ENCODE measurements at regions of chr10 and their contacts with region 1.

Region 1: DNA sequence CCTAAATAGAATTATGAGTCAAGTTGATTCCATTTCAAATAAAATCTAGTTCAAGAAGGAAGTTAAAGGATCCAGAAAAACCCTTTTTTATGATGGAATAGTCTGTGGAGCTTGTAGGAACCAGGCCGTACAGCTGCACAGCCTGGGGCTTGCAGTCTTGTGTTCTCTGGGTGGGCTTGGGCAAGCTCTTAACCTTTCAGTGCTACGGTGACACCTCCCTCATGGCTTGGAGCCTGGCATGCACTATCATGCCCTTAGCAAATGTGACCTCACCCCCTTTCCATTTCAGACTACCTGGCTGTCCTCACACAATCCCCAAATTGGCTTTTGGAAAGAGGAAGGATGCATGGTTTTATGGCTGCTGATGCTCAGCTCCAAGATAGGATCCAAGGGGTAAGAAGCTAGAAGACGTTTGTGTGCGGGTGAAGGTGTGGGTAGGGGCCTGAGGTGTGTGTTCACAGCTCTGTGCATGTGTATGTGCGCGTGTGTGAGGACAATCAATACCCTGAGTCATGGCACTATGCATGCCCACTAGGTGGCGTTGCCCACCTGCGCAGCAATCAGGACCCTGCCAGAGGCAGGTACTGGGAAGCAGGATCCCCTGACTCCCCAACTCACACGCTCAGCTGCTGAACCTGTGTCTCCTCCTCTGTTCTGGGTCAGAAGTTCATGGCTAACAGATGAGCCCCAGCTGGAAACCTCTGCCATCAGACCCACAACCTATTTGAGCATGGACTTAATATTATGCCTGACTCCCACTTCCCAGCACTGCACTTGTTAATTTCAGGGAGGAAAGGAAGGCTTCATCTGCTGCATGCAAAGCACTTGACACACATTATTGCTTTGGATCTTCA is 113.4 kb downstream of the PTPN20 start:
- H3K4me3 ChIP-seq: no peak overlapping the region
- H3K27ac ChIP-seq: no peak overlapping the region
- H3K4me1 ChIP-seq: no peaks in the 10 kb centered on the region
- CTCF ChIP-seq: peak; percentile 70

Region 2: GRCh38 chr10:47013507-47014154 is 11.0 kb before region 1 on chr10:
- CTCF ChIA-PET with region 1: interaction called, 26 read pairs
- POLR2A ChIA-PET with region 1: no interaction called
- H3K4me3 ChIP-seq: no peak overlapping the region
- H3K27ac ChIP-seq: no peak overlapping the region
- H3K4me1 ChIP-seq: no peaks in the 10 kb centered on the region
- CTCF ChIP-seq: no peak

Region 3: GRCh38 chr10:47047671-47048525 is 23.3 kb after region 1 on chr10:
- CTCF ChIA-PET with region 1: interaction called, 28 read pairs
- POLR2A ChIA-PET with region 1: no interaction called
- H3K4me3 ChIP-seq: no peak overlapping the region
- H3K27ac ChIP-seq: no peak overlapping the region
- H3K4me1 ChIP-seq: no peaks in the 10 kb centered on the region
- CTCF ChIP-seq: peak; percentile 70

Region 4: GRCh38 chr10:47090903-47091302 is 66.3 kb after region 1 on chr10:
- CTCF ChIA-PET with region 1: no interaction called
- POLR2A ChIA-PET with region 1: no interaction called
- H3K4me3 ChIP-seq: no peak overlapping the region
- H3K27ac ChIP-seq: no peak overlapping the region
- H3K4me1 ChIP-seq: no peaks in the 10 kb centered on the region
- CTCF ChIP-seq: no peak

Region 5: DNA sequence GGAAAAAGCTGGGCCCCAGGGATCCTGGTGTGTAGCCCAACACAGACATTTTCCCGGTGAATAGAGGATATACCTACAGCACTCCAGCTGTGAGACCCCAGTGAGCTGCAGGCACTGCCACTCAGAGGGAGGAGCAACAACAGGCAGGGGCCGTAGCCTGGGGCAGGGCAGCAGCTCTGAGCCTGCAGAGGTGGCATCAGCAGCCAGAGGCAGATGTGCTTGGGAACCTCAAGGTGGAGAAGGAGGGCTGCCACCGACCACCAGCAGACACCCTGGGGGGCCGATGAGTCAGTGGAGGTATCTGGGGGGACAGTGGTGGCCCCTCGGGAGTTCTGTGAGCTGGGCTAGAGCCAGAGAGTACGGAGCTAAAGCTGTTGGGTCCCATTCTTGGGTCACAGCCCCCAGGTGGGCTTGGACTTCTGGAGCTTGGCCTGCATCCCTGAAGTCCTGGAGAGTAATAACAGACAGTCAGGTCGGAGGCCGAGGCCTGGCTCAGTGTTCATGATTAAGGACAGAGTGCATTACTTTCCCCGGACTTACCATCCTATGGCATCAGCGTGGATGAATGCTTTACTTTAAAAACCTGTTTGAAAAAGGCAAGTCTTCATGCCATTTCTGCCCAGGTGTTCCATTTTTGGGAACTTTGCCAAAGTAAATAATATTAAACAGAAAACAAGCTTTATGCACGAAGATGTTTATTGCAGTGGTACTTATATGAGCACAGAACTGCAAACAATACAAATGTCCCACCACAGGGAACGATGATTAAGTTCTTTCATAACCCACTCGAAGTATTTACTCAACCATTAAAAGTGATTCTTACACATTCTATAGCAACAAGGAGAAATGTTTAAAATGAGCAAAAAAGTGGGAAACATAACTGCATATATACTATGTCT is 165.4 kb after region 1 on chr10:
- CTCF ChIA-PET with region 1: no interaction called
- POLR2A ChIA-PET with region 1: no interaction called
- H3K4me3 ChIP-seq: no peak overlapping the region
- H3K27ac ChIP-seq: no peak overlapping the region
- H3K4me1 ChIP-seq: peaks cover 8% of the 10 kb centered on the region; the same call in 1 of the 2 replicates
- CTCF ChIP-seq: no peak

Region 6: GRCh38 chr10:47300429-47300931 is 275.9 kb after region 1 on chr10:
- CTCF ChIA-PET with region 1: interaction called, 10 read pairs
- POLR2A ChIA-PET with region 1: no interaction called
- H3K4me3 ChIP-seq: peak overlapping the region; percentile 25
- H3K27ac ChIP-seq: no peak overlapping the region
- H3K4me1 ChIP-seq: no peaks in the 10 kb centered on the region
- CTCF ChIP-seq: no peak

Region 7: GRCh38 chr10:47311932-47312662 is 287.5 kb after region 1 on chr10:
- CTCF ChIA-PET with region 1: interaction called, 83 read pairs
- POLR2A ChIA-PET with region 1: no interaction called
- H3K4me3 ChIP-seq: no peak overlapping the region
- H3K27ac ChIP-seq: no peak overlapping the region
- H3K4me1 ChIP-seq: no peaks in the 10 kb centered on the region
- CTCF ChIP-seq: peak; percentile 80

Region 8: GRCh38 chr10:47330804-47331203 is 306.2 kb after region 1 on chr10:
- CTCF ChIA-PET with region 1: interaction called, 11 read pairs
- POLR2A ChIA-PET with region 1: no interaction called
- H3K4me3 ChIP-seq: no peak overlapping the region
- H3K27ac ChIP-seq: no peak overlapping the region
- H3K4me1 ChIP-seq: no peaks in the 10 kb centered on the region
- CTCF ChIP-seq: no peak

Measured in HEK293 (cell line).